ENCODE measurements at regions of chr3 and their contacts with region 1.

Region 1: DNA sequence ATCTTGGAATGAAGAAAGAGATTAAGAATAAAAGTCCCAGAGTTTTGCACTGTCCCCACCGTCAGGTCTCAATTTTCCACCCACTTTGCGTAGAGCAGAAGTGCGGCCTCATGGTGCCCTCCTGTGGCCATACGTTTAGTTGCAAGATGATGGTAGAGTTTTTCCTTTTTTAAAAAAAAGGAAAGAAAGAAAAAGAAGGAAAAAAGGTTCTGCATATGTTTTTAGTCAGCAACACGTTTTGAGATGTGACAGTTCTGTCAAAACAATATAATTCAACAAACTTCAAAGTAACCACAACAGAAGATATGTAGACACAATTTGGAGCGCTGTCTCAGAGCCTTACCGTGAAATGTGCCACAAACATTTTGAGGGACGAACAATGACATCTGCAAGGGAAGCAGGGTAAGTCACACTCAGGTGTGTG is 24.6 kb downstream of the EBLN2 start:
- DNase-seq: peak; percentile 21 to 35
- ATAC-seq: peak in 7 of 8 donors; percentile 41 to 72 (median 66)
- H3K4me3 ChIP-seq: no peak overlapping the region
- H3K27ac ChIP-seq: no peak overlapping the region
- H3K4me1 ChIP-seq: peaks cover 0 to 8% (median 0%) of the 10 kb centered on the region in 9 donors
- H3K27me3 ChIP-seq: no peaks in the 10 kb centered on the region
- CTCF ChIP-seq: peak; percentile 64 to 88 (median 84)

Region 2: GRCh38 chr3:71725279-71725991 is 1360.6 kb before region 1 on chr3 and contains the start of gene EIF4E3:
- intact Hi-C with region 1: loop called in 1 of 10 experiments (anchors 10 kb)
- DNase-seq: peak in 1 of 2 donors; percentile 46
- ATAC-seq: peak; percentile 40 to 78 (median 64)
- H3K4me3 ChIP-seq: peak within 1 kb of the TSS; percentile 54 to 97 (median 80)
- H3K27ac ChIP-seq: peak within 1 kb of the TSS in 9 of 10 donors; percentile 70 to 92 (median 76)
- H3K4me1 ChIP-seq: peaks cover 3 to 66% (median 19%) of the 10 kb centered on the region in 9 donors
- H3K27me3 ChIP-seq: no peaks in the 10 kb centered on the region
- CTCF ChIP-seq: no peak
- total RNA-seq, gene EIF4E3: 44.8 to 58.1 (median 53.0) TPM

Region 3: DNA sequence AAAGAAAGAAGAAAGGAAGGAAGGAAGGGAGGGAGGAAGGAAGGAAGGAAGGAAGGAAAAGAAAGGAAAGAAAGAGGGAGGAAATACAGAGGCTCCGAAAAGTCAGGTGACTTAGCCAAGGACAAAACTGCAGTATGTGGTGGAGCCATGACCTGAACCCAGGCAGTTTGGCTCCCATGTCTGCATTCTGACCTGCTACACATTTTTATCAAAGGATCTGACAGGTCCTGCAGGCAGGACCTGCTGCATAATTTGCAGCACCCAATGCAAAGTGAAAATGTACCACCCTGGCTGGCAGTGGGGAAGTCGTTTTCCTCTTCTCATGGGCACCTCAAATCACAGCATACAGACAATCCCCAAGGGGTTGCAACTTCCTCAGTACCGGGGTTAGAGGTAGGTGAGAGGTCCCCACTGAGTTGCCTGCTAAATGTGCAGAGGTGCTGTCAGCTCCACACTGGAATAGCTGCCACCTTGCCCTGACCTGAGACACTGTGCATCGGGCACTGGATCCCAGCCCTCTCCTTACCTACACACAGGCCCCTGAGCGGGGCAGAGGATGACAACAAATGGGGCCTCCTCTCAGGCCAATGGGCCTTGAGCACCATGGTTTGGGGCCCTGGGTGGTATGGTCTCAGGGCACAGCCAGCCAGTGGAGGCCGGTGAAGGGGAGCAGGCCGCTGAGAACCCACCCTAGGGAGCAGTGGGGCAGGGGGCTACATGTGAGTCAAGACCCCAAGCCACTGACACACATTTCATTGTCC is 412.9 kb before region 1 on chr3:
- intact Hi-C with region 1: no loop called
- DNase-seq: no peak
- ATAC-seq: no peak
- H3K4me3 ChIP-seq: no peak overlapping the region
- H3K27ac ChIP-seq: no peak overlapping the region
- H3K4me1 ChIP-seq: no peaks in the 10 kb centered on the region
- H3K27me3 ChIP-seq: peaks cover 0 to 4% (median 0%) of the 10 kb centered on the region in 7 donors
- CTCF ChIP-seq: no peak

Region 4: DNA sequence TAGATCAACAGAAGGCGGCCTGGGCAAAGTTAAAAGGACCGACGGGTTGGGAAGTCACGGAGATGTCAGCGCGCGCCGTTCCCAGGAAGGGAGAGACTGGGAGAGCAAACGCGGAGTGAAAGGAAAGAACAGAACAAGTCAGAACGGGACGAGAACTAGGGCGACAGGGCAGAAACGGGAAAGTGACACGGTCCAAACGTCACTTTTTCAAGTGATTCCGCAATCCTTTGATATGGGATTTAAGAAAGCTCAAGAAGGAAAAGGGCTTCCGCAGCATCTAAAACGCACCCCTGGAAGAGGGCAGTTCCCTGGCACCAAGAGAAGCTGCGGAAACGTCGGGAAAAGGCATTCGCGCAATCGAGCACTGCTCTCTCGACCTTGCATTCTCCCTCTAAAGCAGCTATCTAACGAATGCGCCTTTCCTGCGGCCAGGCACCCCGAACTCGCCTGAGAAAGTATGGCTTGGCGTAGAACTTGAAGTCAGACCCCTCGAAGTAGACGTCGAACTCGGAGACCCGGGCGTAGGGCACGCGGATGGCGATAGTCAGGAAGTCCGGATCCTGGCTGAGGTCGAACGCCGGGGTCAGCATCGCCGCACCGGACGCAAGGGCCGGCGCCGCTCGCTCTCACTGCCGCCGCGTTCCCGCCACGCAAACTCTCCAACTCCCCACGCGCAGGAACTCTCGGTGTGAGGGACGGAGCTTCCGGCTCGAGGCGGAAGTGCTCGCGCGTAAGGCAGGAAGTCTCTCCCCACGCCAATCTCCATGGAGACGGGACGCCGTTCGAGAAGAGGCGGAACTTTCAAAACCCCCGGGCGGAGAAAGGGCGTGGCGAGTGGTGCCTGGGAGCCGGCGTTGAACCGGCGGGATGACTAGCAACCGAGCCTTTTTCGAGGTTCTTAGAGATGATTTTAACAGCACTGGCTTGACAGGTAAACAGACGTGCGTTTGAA is 238.1 kb before region 1 on chr3 and contains the start of gene SHQ1:
- intact Hi-C with region 1: loop called in 6 of 10 experiments (anchors 5 to 10 kb)
- DNase-seq: peak; percentile 96 to 97
- ATAC-seq: peak; percentile 97 to 99 (median 99)
- H3K4me3 ChIP-seq: peak within 1 kb of the TSS; percentile 51 to 97 (median 80)
- H3K27ac ChIP-seq: peak within 1 kb of the TSS in 9 of 10 donors; percentile 74 to 89 (median 81)
- H3K4me1 ChIP-seq: peaks cover 7 to 45% (median 24%) of the 10 kb centered on the region in 9 donors
- H3K27me3 ChIP-seq: no peaks in the 10 kb centered on the region
- CTCF ChIP-seq: no peak
- total RNA-seq, gene SHQ1: 13.9 to 24.0 (median 19.7) TPM

Region 5: GRCh38 chr3:72862314-72863090 is 223.6 kb before region 1 on chr3:
- intact Hi-C with region 1: loop called in 5 of 10 experiments (anchors 10 kb)
- DNase-seq: no peak
- ATAC-seq: no peak
- H3K4me3 ChIP-seq: no peak overlapping the region
- H3K27ac ChIP-seq: no peak overlapping the region
- H3K4me1 ChIP-seq: no peaks in the 10 kb centered on the region
- H3K27me3 ChIP-seq: no peaks in the 10 kb centered on the region
- CTCF ChIP-seq: no peak

Region 6: GRCh38 chr3:72951259-72951722 is 134.8 kb before region 1 on chr3:
- intact Hi-C with region 1: loop called in 1 of 10 experiments (anchors 10 kb)
- DNase-seq: no peak
- ATAC-seq: no peak
- H3K4me3 ChIP-seq: no peak overlapping the region
- H3K27ac ChIP-seq: no peak overlapping the region
- H3K4me1 ChIP-seq: no peaks in the 10 kb centered on the region
- H3K27me3 ChIP-seq: no peaks in the 10 kb centered on the region
- CTCF ChIP-seq: no peak

Region 7: DNA sequence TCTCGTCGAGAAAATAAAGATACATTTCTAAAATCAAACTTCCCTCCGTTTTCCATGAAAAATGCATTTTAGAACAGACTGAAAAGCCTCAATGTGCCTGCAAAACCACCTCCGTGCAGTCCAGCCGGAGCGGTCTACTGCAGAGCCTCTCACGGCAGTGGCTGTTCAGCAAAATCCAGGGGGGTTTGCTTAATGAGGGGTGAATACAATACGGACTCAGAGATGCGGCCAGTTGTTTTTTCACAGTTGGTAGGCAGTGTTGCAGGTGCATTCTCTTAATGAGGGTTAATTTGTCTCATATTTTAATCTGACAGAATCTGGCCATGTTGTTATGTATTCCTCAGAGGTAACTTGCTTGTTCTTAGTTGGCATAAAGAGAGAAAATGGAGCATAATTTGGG is 198.4 kb after region 1 on chr3:
- intact Hi-C with region 1: no loop called
- DNase-seq: no peak
- ATAC-seq: no peak
- H3K4me3 ChIP-seq: no peak overlapping the region
- H3K27ac ChIP-seq: no peak overlapping the region
- H3K4me1 ChIP-seq: no peaks in the 10 kb centered on the region
- H3K27me3 ChIP-seq: no peaks in the 10 kb centered on the region
- CTCF ChIP-seq: no peak

Measured in heart right ventricle (tissue), 16 donors.